ENCODE measurements at regions of chr11 and their contacts with region 1.

Region 1: GRCh38 chr11:2305140-2305840 is 3.5 kb downstream of the TSPAN32 start:
- DNase-seq: no peak
- H3K4me3 ChIP-seq: no peak overlapping the region
- CTCF ChIP-seq: peak; percentile 79

Region 2: DNA sequence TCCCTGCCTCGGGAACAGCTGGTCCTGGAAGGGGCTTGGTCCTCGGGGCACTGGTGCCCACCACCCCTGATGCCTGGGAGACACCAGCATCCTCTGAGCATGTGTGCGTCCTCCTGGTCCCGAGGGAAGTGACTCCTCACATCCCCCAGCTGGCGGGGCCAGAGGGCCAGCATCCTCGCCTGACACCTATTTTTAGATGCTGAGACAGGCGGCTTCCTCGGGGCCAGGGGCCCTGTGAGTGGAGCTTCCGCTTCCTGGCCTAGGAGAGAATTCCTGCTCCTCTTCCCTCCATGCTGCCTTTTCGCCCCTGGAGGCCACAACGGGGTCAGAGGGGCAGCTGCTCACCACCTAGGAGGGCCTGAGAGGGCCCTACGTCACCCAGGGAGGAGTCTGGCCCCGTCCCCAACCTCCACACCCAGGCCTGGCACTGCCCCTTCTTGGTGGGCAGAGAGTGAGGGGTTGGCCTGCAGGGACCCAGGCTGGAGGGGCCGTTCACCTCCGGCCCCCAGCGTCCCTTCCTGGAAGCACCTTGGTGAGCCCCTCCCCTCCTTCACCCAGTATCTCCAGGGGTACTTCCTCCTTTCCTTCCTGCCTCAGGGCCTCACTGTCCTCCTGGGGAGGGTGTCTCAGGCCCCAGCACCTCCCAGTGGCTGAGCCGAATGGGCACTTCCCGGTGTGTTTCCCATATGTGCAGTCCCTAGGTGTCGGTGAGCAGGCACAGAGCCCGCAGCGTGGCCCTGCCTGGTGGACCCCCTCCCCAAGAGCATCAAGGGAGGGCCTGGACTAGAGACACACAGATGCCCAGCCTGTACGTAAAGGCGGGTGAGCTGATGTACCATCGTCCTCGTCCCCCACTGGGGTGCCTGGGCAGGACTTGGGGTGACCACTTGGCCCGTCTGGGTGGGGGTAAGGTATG is 77.9 kb after region 1 on chr11:
- CTCF ChIA-PET with region 1: interaction called, 12 read pairs
- POLR2A ChIA-PET with region 1: interaction called, 9 read pairs
- DNase-seq: no peak
- H3K4me3 ChIP-seq: no peak overlapping the region; the same call in 1 of the 2 replicates
- CTCF ChIP-seq: no peak

Region 3: DNA sequence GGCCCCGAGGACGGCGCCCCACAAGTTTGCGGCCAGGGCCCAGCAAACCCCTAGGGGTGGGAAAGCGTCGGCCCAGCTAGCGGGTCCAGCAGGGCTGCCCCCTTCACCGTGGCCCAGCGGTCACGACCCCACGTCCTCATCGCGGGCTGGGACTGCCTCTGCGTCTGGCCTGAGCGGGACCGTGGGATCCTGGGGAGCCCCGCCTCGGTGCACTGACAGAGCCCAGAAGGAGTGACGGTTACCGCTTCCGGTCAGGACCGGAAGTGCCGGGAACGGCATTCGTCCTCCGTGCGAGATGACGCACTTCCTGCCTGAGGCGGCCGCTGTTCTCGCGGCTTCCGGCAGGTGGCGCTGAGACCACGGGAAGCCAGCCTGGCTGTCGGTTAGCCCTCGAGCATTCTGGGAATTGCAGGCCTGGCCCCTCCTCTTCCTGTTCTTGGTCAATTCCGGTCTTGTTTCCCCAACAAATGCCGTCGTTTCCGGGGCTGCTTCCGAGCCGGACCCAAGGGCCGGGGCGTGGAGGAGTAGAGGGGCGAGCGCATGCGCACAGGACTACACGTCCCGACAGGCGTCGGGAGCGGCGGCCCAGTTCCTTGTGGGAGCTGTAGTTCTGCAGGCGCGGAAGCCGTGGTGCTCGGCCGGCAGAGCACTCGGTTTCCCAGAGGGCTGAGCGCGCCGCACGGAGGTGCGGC is 94.9 kb after region 1 on chr11 and contains the start of gene TSSC4:
- CTCF ChIA-PET with region 1: interaction called, 61 read pairs
- POLR2A ChIA-PET with region 1: interaction called, 5 read pairs
- DNase-seq: peak; percentile 99
- H3K4me3 ChIP-seq: peak within 1 kb of the TSS; percentile 99
- CTCF ChIP-seq: peak; percentile 99

Region 4: DNA sequence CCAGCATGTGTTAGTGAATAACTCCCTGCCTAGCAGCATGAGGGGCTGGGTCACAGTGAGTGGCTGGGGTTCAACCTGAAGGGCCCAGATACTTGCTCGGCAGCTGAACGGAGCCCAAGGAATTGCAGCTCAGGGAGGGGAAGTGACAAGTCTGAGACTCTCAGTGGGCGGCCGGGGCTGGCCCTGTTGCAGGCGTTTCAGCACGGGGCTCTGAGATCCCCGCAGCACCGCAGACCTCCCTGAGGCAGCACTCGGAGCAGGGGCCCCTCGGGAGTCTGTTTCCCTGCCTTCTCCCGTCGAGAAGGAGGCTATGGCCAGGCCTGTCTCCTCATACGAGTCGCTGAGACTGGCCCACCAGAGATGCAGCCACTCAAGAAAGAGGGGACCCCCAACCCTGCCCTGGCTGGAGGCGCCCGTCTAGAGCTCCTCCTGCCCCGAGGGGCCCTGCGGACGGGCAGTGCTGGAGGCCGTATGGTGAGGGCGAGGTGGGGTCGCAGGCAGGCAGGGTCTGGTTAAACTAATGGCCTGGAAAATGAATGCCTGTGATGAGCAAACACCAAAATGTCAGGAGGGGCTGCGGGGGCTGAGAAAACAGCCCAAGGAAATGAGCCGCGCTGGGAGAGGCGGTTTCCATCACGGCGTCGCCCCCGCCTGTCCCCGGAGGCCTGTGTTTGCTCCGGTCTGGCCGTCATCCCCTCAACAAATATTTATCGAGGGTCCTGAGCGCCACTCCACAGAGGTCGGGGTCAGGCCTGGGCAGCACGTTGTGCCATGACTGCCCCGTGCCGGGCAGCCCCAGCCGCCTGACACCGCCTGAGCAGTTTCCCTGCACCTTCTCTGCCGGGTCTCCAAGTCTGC is 104.5 kb after region 1 on chr11:
- CTCF ChIA-PET with region 1: interaction called, 381 read pairs
- POLR2A ChIA-PET with region 1: interaction called, 3 read pairs
- DNase-seq: no peak
- H3K4me3 ChIP-seq: no peak overlapping the region
- CTCF ChIP-seq: no peak

Measured in AG04449 (cell line).